ENCODE measurements at regions of chr3 and their contacts with region 1.

Region 1: GRCh38 chr3:62159709-62160092 is 213.6 kb downstream of the FEZF2 start:
- DNase-seq: peak; percentile 84

Region 2: DNA sequence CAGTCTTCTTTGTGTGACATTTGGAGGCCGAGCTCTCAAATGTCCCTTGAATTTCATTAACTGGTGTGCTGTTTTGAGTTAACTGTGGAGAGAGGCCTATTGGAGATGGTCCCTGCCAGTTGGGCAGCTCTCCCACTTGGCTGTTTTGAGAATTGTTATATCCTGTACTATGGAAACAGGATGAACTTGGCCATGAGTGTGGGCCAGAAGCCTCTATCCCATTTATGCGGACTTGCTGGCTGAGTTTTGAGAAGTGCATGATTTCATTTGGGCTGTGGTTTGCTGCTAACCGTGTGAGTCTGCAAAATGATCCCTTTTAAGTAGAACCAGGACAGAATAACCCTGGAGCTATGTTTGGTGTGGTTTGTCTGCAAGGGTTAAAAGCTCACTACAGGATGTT is 232.4 kb before region 1 on chr3:
- intact Hi-C with region 1: loop called (anchors 5 kb)
- DNase-seq: peak; percentile 87

Region 3: DNA sequence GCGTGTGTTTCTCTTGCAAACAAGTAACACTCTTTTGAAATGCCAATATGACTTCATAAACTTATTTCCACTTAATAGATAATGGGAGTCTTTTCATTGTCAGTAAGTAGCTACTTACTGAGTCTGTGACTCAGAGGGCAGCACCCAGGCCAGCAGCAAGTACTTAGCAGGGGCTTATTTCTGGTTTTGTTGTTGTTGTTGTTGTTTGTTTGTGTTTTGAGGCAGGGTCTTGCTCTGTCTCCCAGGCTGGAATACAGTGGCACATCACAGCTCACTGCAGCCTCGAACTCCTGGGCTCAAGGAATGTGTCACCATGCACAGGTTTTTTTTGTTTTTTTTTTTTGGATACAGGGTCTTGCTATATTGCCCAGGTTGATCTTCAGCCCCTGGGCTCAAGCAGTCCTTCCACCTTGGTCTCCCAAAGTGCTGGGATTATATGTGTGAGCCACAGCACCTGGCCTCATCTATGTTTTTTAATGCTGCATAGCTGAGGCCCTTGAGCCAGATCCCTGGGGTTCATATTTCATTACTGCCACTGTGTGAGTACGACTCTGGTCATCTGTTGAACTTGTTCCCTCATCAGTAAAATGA is 139.1 kb before region 1 on chr3:
- intact Hi-C with region 1: no loop called
- DNase-seq: no peak

Region 4: GRCh38 chr3:62090066-62090465 is 69.6 kb before region 1 on chr3:
- intact Hi-C with region 1: loop called (anchors 2 kb)
- DNase-seq: no peak